Sigmoid colon (tissue), 7 donors: ENCODE measurements at regions of chr10 and their contacts with region 1.

Region 1: GRCh38 chr10:14878266-14879054 is at the start of gene SUV39H2:
- DNase-seq: peak; percentile 98
- H3K4me3 ChIP-seq: peak within 1 kb of the TSS; percentile 58 to 99 (median 82)
- H3K27ac ChIP-seq: peak within 1 kb of the TSS; percentile 94 to 95 (median 94)
- H3K4me1 ChIP-seq: peaks cover 0 to 32% (median 17%) of the 10 kb centered on the region in 4 donors
- H3K27me3 ChIP-seq: no peaks in the 10 kb centered on the region
- CTCF ChIP-seq: no peak
- EP300 ChIP-seq: no peak
- POLR2A ChIP-seq: peak; percentile 40 to 45
- total RNA-seq, gene SUV39H2: 3.9 to 6.4 (median 5.3) TPM

Region 2: GRCh38 chr10:13348216-13349017 is 1530.0 kb before region 1 on chr10 and contains the start of gene SEPHS1:
- intact Hi-C with region 1: loop called (anchors 5 kb)
- DNase-seq: peak; percentile 84
- H3K4me3 ChIP-seq: peak within 1 kb of the TSS; percentile 69 to 91 (median 87)
- H3K27ac ChIP-seq: peak within 1 kb of the TSS; percentile 95 to 97 (median 96)
- H3K4me1 ChIP-seq: peaks cover 0 to 32% (median 28%) of the 10 kb centered on the region in 4 donors
- H3K27me3 ChIP-seq: peaks cover 0 to 18% (median under 1%) of the 10 kb centered on the region in 3 donors
- CTCF ChIP-seq: peak in 1 of 4 experiments; percentile 3
- EP300 ChIP-seq: no peak
- POLR2A ChIP-seq: no peak
- total RNA-seq, gene SEPHS1: 31.4 to 41.0 (median 37.6) TPM

Region 3: DNA sequence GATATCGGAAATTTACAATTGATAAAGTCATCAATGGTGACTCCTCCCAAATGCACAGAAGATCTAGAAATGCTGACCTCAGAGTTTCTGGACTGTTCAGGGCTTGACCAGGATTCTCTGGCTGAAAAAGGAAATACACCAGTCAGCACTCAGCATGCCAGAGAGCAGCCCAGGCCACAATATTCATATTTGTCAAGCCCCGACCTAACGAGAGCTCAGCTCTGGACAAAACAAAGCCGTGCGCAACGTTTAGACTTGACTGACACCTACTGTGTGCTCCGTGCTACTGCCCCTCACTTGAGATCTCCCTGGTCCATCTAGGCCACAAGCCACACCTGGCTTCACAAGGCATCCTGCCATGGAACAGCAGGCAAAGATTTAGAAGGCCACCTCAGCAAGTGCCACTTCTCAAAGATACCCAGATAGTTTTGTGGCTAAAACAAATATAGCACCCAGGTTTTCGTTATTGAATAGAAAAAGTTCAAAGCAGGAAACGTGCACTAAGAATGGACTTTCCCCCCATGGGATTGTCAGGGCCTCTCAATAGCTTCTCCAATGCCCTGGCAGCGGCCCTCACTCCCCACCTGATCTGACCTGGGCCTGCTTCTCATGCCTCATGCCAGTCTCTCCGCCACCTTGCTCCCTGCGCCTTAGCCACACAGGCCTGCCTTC is 322.0 kb before region 1 on chr10:
- intact Hi-C with region 1: no loop called
- DNase-seq: no peak
- H3K4me3 ChIP-seq: no peak overlapping the region
- H3K27ac ChIP-seq: peak overlapping the region in 2 of 4 donors; percentile 5 to 20
- H3K4me1 ChIP-seq: peaks cover 0 to 15% (median 10%) of the 10 kb centered on the region in 4 donors
- H3K27me3 ChIP-seq: no peaks in the 10 kb centered on the region
- CTCF ChIP-seq: no peak
- EP300 ChIP-seq: no peak
- POLR2A ChIP-seq: no peak

Region 4: GRCh38 chr10:14954001-14954770 is 75.7 kb after region 1 on chr10 and contains the start of gene DCLRE1C:
- intact Hi-C with region 1: loop called (anchors 1 kb)
- DNase-seq: peak; percentile 95
- H3K4me3 ChIP-seq: peak within 1 kb of the TSS; percentile 56 to 79 (median 64)
- H3K27ac ChIP-seq: peak within 1 kb of the TSS; percentile 84 to 91 (median 88)
- H3K4me1 ChIP-seq: peaks cover 0 to 25% (median 19%) of the 10 kb centered on the region in 4 donors
- H3K27me3 ChIP-seq: no peaks in the 10 kb centered on the region
- CTCF ChIP-seq: no peak
- EP300 ChIP-seq: no peak
- POLR2A ChIP-seq: no peak
- total RNA-seq, gene DCLRE1C: 9.7 to 17.5 (median 10.0) TPM

Region 5: DNA sequence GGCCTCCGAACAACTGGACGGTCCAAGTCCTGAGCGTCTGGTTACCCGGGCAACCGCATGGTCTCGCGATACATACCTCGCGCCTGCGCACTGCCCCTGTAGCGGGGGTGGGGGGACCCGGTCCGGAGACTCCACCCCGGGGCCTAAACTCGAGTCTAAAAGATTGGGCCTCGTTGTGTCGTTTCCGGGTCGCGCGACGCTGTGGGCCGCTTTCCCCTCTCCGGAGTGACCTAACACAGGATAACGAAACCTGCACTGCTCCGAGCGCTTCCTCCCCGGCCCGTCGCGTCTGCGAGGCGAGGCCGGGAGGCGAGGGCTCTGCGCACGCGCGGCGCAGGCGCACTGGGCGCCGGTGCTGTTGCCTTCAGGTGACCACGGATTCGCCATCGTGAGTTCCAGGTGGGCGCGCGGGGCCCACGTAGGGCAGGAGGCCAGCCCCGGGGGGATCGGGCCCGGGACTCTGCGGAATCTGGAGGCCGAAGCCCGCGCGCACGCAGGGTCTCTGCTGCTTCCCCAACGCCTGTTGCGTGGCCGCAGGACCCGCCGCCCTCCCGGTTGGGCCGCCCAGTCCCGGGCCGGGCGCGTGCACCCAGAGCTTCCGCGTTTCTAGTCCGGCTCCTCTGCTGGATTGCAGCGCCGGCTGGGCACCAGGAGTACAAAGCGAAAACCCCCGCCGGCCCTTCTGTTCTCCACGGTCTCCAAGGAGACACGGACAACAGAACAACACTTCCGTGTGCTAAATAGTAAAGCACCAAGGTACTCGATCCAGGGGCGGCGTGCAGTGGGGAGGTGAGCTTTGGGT is 218.8 kb after region 1 on chr10 and contains the start of gene RPP38:
- intact Hi-C with region 1: loop called (anchors 5 kb)
- DNase-seq: peak; percentile 98
- H3K4me3 ChIP-seq: peak within 1 kb of the TSS; percentile 64 to 84 (median 76)
- H3K27ac ChIP-seq: peak within 1 kb of the TSS; percentile 87 to 95 (median 91)
- H3K4me1 ChIP-seq: peaks cover 0 to 32% (median 28%) of the 10 kb centered on the region in 4 donors
- H3K27me3 ChIP-seq: no peaks in the 10 kb centered on the region
- CTCF ChIP-seq: no peak
- EP300 ChIP-seq: no peak
- POLR2A ChIP-seq: peak in 1 of 2 donors; percentile 58
- total RNA-seq, gene RPP38: 8.7 to 29.5 (median 15.6) TPM

Region 6: DNA sequence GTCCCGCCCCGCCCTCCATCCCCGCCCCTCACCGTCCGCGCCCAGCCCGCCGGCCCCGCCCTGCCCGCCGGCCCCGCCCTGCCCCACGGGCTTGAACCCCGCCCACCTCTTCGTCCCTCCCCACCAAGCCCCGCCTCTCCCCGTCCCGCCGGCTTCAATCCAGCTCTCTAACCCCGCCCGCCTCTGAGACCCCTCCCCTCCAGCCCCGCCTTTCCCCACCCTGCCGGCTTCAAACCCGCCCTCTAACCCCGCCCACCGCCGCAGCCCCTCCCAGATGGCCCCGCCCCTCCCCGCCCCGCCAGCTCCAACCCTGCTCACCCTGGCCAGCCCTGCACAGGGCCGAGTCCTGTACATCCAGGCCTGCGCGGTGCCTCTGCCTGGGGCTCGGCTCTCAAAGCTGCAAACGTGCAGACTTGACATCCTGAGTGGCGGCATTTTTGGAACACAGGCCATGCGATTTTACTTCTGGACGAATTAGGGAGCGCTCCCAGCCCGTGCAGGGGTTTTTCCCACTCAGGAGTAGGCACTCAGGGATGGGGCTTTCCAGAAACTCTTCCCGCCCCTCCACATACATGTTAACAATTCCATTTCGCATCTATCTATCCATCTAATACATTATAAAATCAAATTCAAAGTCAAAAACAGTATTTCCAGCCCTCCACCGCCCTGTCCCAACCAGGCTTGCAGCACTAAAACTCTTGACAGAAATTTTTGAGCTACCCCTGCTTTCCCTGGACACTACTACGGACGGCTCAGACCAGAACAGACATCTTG is 290.5 kb after region 1 on chr10:
- intact Hi-C with region 1: loop called (anchors 5 kb)
- DNase-seq: peak; percentile 99
- H3K4me3 ChIP-seq: peak overlapping the region in 2 of 4 donors; percentile 21 to 98
- H3K27ac ChIP-seq: peak overlapping the region; percentile 56 to 72 (median 68)
- H3K4me1 ChIP-seq: peaks cover 0 to 22% (median 13%) of the 10 kb centered on the region in 4 donors
- H3K27me3 ChIP-seq: no peaks in the 10 kb centered on the region
- CTCF ChIP-seq: no peak
- EP300 ChIP-seq: no peak
- POLR2A ChIP-seq: no peak